OCI-LY7 (cell line): ENCODE measurements at regions of chr17 and their contacts with region 1.

Region 1: GRCh38 chr17:55053855-55054254 is 85.3 kb downstream of the STXBP4 start:
- DNase-seq: peak; percentile 20
- H3K4me3 ChIP-seq: no peak overlapping the region
- H3K27ac ChIP-seq: no peak overlapping the region
- H3K4me1 ChIP-seq: no peaks in the 10 kb centered on the region
- CTCF ChIP-seq: peak; percentile 79

Region 2: DNA sequence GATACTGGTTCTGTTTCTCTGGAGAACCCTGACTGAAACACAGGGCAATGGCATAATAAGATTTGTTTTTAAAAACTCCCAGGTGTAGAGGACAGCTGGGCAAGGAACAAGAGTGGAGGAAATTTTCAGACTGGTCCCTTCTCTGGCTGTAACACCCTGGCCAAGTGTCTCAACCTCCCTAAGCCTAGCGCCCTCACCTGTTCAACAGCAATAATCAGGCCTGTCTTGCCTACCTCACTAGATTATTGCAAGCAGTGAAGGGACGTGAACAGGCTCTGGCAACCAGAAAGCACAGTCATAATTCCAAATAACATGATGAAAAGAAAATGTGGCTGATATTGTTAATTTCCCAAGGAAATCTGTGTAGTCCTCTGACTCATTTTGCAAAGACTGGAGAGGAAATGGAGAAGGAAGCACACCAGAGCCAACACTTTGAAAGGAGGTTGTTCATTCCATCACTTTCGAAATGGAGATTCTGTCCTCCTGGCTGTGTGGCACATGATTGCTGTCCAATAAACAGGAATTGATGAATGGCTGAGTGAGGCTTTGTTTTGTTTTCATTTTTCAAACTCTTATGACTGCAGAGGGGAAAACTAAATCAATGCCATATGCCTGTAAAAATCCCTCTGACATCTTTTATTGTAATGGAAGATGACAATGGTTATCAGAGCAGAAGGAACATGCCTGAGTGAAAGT is 123.5 kb after region 1 on chr17:
- CTCF ChIA-PET with region 1: no interaction called
- POLR2A ChIA-PET with region 1: no interaction called
- intact Hi-C with region 1: loop called (anchors 5 kb)
- DNase-seq: peak; percentile 59
- H3K4me3 ChIP-seq: no peak overlapping the region
- H3K27ac ChIP-seq: peak overlapping the region; percentile 67
- H3K4me1 ChIP-seq: peaks cover 41% of the 10 kb centered on the region
- CTCF ChIP-seq: peak; percentile 79

Region 3: GRCh38 chr17:55295411-55296170 is 241.7 kb after region 1 on chr17:
- CTCF ChIA-PET with region 1: no interaction called
- POLR2A ChIA-PET with region 1: no interaction called
- intact Hi-C with region 1: loop called (anchors 1 kb)
- DNase-seq: peak; percentile 67
- H3K4me3 ChIP-seq: no peak overlapping the region
- H3K27ac ChIP-seq: no peak overlapping the region
- H3K4me1 ChIP-seq: peaks cover 4% of the 10 kb centered on the region
- CTCF ChIP-seq: peak; percentile 91

Region 4: DNA sequence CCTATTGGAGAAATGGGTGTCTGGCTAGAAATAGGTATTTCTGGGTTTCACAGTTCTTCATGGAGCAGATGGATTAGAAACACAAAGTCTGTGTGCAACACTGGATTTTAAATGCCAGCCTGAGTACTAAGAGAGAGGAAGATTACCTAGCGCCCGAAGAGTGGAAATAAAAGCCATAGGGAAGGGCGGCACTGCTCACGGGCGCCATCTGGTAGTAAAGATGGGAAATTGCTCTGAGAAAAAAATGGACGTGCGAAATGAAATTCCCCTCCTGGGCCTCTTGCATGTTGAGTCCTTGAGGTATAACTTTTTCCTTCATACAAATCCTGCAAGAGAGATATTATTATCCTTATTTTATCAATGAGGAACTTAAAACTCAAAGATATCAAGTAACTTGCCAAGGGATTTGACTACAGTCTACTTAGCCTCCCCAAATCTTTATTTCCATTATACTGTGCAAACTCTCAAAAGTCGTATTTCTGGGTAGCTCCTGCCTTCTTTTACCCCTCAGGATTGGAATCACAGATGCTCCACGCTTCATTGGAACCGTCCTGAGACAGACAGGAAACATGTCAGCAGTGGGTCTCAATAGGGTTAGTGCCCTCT is 295.0 kb after region 1 on chr17:
- CTCF ChIA-PET with region 1: no interaction called
- POLR2A ChIA-PET with region 1: no interaction called
- intact Hi-C with region 1: loop called (anchors 5 kb)
- DNase-seq: peak; percentile 63
- H3K4me3 ChIP-seq: no peak overlapping the region
- H3K27ac ChIP-seq: no peak overlapping the region
- H3K4me1 ChIP-seq: no peaks in the 10 kb centered on the region
- CTCF ChIP-seq: peak; percentile 96